ENCODE measurements at regions of chr2 and their contacts with region 1.

Region 1: DNA sequence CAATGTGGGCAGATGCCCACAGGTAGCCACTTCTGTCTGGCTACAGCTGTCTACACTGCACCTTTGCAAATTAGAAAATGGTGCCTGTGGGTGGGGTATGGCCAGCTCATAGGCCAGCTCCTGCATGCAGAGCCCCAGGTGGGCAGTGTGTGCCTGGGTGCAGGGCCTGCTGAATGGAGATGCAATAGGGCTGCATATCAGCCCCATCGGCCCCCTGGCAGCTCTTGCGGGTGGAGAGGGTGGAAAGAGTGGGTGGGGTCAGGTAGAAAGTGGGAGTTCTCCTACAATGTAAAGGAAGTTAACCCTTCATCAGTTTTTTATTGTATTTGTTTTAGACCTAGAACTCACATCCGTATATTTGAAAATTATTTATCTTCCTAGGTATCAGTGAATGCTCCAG is 37.1 kb downstream of the FBLN7 start:
- DNase-seq: no peak
- ATAC-seq: no peak
- H3K4me3 ChIP-seq: no peak overlapping the region
- H3K4me3 Mint-ChIP-seq: no peak overlapping the region
- H3K27ac ChIP-seq: no peak overlapping the region
- H3K27ac Mint-ChIP-seq: no peak overlapping the region
- H3K4me1 ChIP-seq: no peaks in the 10 kb centered on the region
- H3K4me1 Mint-ChIP-seq: peaks cover 3% of the 10 kb centered on the region
- H3K27me3 ChIP-seq: no peaks in the 10 kb centered on the region
- H3K27me3 Mint-ChIP-seq: peaks cover 6% of the 10 kb centered on the region
- CTCF ChIP-seq: no peak

Region 2: DNA sequence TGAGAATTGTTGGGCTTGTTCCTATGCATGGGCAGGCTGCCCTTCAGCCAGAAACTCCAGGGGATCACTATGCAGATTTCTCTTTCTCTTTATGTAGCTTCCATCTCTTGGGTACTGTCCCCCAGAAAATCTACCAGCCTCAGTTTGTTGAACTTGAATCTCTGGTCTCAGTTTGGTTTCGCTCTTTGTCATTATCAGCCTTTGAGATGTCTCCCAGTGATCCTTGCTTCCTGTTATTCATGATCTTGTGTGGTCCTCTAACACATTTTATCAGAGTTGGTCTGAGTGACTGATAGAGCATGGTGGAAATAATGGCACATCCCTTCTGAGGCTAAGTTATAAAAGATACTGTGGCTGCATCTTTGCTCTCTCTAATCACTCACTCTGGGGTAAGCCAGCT is 112.4 kb before region 1 on chr2:
- CTCF ChIA-PET with region 1: no interaction called
- POLR2A ChIA-PET with region 1: no interaction called
- intact Hi-C with region 1: loop called in 1 of 2 experiments (anchors 5 kb)
- DNase-seq: no peak
- ATAC-seq: no peak
- H3K4me3 ChIP-seq: no peak overlapping the region
- H3K4me3 Mint-ChIP-seq: no peak overlapping the region
- H3K27ac ChIP-seq: no peak overlapping the region
- H3K27ac Mint-ChIP-seq: no peak overlapping the region
- H3K4me1 ChIP-seq: no peaks in the 10 kb centered on the region
- H3K4me1 Mint-ChIP-seq: peaks cover 50% of the 10 kb centered on the region
- H3K27me3 ChIP-seq: no peaks in the 10 kb centered on the region
- H3K27me3 Mint-ChIP-seq: no peaks in the 10 kb centered on the region
- CTCF ChIP-seq: no peak

Region 3: GRCh38 chr2:112290088-112290487 is 114.8 kb after region 1 on chr2:
- CTCF ChIA-PET with region 1: no interaction called
- POLR2A ChIA-PET with region 1: no interaction called
- intact Hi-C with region 1: no loop called
- DNase-seq: no peak
- ATAC-seq: no peak
- H3K4me3 ChIP-seq: no peak overlapping the region
- H3K4me3 Mint-ChIP-seq: no peak overlapping the region
- H3K27ac ChIP-seq: no peak overlapping the region
- H3K27ac Mint-ChIP-seq: no peak overlapping the region
- H3K4me1 ChIP-seq: no peaks in the 10 kb centered on the region
- H3K4me1 Mint-ChIP-seq: peaks cover 15% of the 10 kb centered on the region
- H3K27me3 ChIP-seq: no peaks in the 10 kb centered on the region
- H3K27me3 Mint-ChIP-seq: no peaks in the 10 kb centered on the region
- CTCF ChIP-seq: no peak

Measured in CD8-positive, alpha-beta T cell (primary cell).